Heart left ventricle (tissue), 16 donors: ENCODE measurements at regions of chr12 and their contacts with region 1.

Region 1: DNA sequence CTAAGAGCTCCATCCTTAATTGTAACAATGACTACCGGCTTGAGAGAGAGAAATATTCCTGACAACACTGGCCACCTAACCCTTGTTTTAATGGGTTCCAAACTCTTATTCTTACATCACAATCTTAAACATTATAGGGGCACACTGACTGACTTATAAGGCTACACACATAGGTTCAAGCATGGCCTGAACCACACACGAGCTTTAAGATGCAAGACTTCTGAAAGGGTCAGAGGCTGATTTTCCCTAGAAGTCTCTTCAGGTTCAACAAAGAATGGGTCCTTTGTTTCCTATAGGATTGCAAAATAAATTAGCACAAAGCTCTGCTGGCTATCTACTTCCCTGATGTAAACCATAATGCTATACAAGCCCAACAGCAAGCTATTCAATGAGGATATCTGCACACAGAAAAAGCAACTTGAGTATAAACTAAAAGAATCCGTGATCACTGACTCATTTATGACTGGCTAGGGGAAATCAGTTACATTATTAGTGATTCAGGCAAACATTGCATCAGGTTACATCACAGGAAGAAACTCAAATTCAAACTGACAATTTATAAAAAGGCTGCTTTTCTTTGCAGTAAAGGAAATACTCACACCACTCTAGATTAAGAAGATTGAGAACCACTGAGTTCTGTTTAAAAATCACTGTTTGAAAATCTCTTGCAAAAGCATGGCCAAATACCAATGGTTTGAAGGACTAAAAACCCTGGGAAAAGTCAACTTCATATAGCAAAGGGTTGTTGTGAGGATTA is 8.5 kb downstream of the BTG1 start:
- DNase-seq: no peak
- ATAC-seq: no peak
- H3K4me3 ChIP-seq: peak overlapping the region in 9 of 12 donors; percentile 3 to 92 (median 76)
- H3K27ac ChIP-seq: peak overlapping the region in 9 of 12 donors; percentile 7 to 99 (median 54)
- H3K4me1 ChIP-seq: peaks cover 6 to 95% (median 71%) of the 10 kb centered on the region in 12 donors
- H3K27me3 ChIP-seq: no peaks in the 10 kb centered on the region
- CTCF ChIP-seq: no peak
- POLR2A ChIP-seq: no peak

Region 2: DNA sequence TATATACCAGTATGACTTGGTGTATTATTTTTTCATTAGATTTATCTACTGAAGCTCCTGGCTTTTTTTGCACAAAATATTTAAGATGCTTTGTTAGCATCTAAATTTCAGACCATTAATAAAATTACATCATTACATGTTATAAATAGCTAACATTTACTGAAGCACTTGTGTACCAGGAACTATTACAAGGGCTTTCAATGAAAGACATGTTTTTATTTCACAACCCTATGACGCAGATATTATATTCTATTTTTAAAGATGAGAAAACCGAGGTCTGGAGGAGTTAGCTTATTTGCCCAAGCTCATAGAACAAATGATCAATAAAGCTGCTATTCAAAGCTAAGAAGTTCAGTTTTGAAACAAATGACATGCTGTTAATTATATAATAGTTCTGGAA is 534.1 kb before region 1 on chr12:
- intact Hi-C with region 1: loop called in 2 of 10 experiments (anchors 10 kb)
- DNase-seq: no peak
- ATAC-seq: peak; percentile 83 to 95 (median 88)
- H3K4me3 ChIP-seq: no peak overlapping the region
- H3K27ac ChIP-seq: peak overlapping the region in 5 of 12 donors; percentile 12 to 58 (median 33)
- H3K4me1 ChIP-seq: peaks cover 0 to 23% (median 4%) of the 10 kb centered on the region in 12 donors
- H3K27me3 ChIP-seq: no peaks in the 10 kb centered on the region
- CTCF ChIP-seq: no peak
- POLR2A ChIP-seq: no peak

Region 3: GRCh38 chr12:91811481-91812287 is 325.5 kb before region 1 on chr12:
- intact Hi-C with region 1: loop called in 8 of 10 experiments (anchors 2 to 5 kb)
- DNase-seq: peak; percentile 56 to 77 (median 67)
- ATAC-seq: peak in 3 of 4 donors; percentile 61 to 76 (median 68)
- H3K4me3 ChIP-seq: no peak overlapping the region
- H3K27ac ChIP-seq: no peak overlapping the region
- H3K4me1 ChIP-seq: no peaks in the 10 kb centered on the region
- H3K27me3 ChIP-seq: no peaks in the 10 kb centered on the region
- CTCF ChIP-seq: peak; percentile 72 to 90 (median 82)
- POLR2A ChIP-seq: no peak

Region 4: GRCh38 chr12:91985002-91985787 is 151.9 kb before region 1 on chr12:
- intact Hi-C with region 1: loop called in 5 of 10 experiments (anchors 5 to 10 kb)
- DNase-seq: no peak
- ATAC-seq: peak in 1 of 4 donors; percentile 56
- H3K4me3 ChIP-seq: no peak overlapping the region
- H3K27ac ChIP-seq: peak overlapping the region in 4 of 12 donors; percentile 2 to 46 (median 30)
- H3K4me1 ChIP-seq: peaks cover 0 to 58% (median 29%) of the 10 kb centered on the region in 12 donors
- H3K27me3 ChIP-seq: no peaks in the 10 kb centered on the region
- CTCF ChIP-seq: no peak
- POLR2A ChIP-seq: no peak

Region 5: DNA sequence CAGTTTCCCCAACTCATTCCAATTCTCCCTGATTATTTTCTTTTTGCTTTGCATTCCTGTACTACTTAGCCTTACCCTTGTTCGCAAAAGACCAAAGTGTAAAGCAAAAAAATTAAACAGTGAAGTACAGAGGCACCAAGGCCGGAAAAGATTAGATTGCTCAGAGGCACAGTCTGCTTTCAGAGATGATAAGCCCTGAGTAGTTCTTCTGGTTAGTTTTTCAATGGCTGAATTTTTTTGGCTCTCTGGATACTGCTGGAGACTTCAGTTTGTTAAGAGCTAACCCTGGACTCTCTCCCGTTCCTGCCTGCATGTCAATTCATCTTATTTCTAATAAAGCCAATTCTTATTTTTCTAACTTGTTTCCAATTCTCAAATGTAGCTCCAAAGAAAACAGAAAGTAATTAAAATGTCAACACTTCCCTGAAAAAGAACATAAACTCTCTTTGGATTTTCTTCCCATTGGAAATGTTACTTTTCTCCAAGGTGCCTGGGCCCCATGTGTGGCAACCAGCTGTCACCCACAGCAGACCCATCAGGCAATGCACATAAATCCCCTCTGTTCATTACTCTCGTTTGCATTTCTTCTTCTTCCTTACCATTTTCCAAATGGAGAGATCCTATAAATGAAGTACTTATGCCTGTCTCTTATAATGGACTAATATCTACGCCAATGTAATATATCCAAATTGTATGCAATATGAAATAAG is 134.3 kb before region 1 on chr12:
- intact Hi-C with region 1: loop called in 2 of 10 experiments (anchors 5 to 10 kb)
- DNase-seq: no peak
- ATAC-seq: peak; percentile 67 to 73 (median 70)
- H3K4me3 ChIP-seq: no peak overlapping the region
- H3K27ac ChIP-seq: peak overlapping the region in 10 of 12 donors; percentile 4 to 72 (median 44)
- H3K4me1 ChIP-seq: peaks cover 0 to 30% (median 12%) of the 10 kb centered on the region in 12 donors
- H3K27me3 ChIP-seq: no peaks in the 10 kb centered on the region
- CTCF ChIP-seq: no peak
- POLR2A ChIP-seq: no peak

Region 6: GRCh38 chr12:92049403-92049802 is 87.7 kb before region 1 on chr12:
- intact Hi-C with region 1: loop called in 1 of 10 experiments (anchors 10 kb)
- DNase-seq: no peak
- ATAC-seq: no peak
- H3K4me3 ChIP-seq: no peak overlapping the region
- H3K27ac ChIP-seq: no peak overlapping the region
- H3K4me1 ChIP-seq: peaks cover 0 to 18% (median 0%) of the 10 kb centered on the region in 12 donors
- H3K27me3 ChIP-seq: no peaks in the 10 kb centered on the region
- CTCF ChIP-seq: no peak
- POLR2A ChIP-seq: no peak

Region 7: GRCh38 chr12:92078167-92079053 is 58.7 kb before region 1 on chr12:
- intact Hi-C with region 1: loop called in 5 of 10 experiments (anchors 5 to 10 kb)
- DNase-seq: no peak
- ATAC-seq: peak in 3 of 4 donors; percentile 64 to 82 (median 69)
- H3K4me3 ChIP-seq: no peak overlapping the region
- H3K27ac ChIP-seq: peak overlapping the region in 3 of 12 donors; percentile 1 to 51 (median 4)
- H3K4me1 ChIP-seq: peaks cover 0 to 58% (median 24%) of the 10 kb centered on the region in 12 donors
- H3K27me3 ChIP-seq: no peaks in the 10 kb centered on the region
- CTCF ChIP-seq: no peak
- POLR2A ChIP-seq: no peak